Activated CD8-positive, alpha-beta T cell treated with anti-CD3 and anti-CD28 coated beads, Interleukin-2, amount 10 ng/mL, durations not matched to agents 7 days and 5 days (primary cell): ENCODE measurements at regions of chr1 and their contacts with region 1.

Region 1: GRCh38 chr1:10430216-10431069 is at the start of gene CENPS:
- DNase-seq: peak; percentile 93
- ATAC-seq: peak; percentile 89
- H3K4me3 Mint-ChIP-seq: peak within 1 kb of the TSS; percentile 93
- H3K27ac Mint-ChIP-seq: peak within 1 kb of the TSS; percentile 95
- H3K4me1 Mint-ChIP-seq: peaks cover 27% of the 10 kb centered on the region
- H3K27me3 Mint-ChIP-seq: no peaks in the 10 kb centered on the region
- total RNA-seq, gene CENPS: 18.3 to 21.9 TPM

Region 2: DNA sequence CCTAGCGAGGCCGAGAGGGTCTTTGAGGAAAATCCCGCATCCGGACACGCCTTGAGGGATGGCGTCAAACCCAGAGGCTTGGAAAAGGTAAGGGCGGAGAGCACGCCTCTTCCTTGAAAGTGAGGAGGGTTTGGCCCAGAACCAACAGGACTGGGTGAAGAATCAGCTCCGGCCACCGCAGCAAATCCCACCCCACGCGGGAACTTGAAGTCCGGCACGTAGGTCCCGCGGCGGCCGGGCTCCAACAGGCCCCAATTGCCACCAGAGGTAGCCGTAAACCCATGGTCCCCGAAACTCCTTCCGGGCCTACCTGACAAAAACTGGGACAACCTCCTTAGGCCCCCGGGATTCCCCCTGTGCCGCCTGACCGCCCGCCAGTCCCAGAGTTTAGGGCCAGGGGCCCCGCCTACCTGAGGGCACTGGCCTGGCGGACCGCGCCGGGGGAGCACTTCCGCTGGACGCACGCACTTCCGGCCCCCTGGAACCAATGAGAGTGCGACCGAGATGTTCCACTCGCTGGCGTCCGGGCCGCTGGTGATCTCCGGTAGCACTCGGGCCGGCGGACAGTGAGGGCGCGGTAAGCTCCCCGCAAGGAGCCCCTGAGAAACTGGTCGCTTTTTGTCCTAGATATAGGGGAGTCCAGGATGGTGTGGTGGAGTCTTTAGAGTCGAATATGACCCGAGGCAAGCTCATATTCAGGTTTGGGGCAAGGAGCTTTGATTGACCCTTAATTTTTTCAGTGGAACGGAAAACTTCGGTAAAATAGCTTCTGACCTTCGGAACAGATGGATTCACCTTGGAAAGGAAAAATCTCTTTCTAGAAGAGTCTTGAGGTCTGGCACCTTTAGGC is 487.3 kb before region 1 on chr1 and contains the starts of genes LZIC and NMNAT1:
- CTCF ChIA-PET with region 1: interaction called, 20 read pairs
- POLR2A ChIA-PET with region 1: no interaction called
- DNase-seq: peak; percentile 94
- ATAC-seq: peak; percentile 95
- H3K4me3 Mint-ChIP-seq: peak within 1 kb of the TSS; percentile 99
- H3K27ac Mint-ChIP-seq: peak within 1 kb of the TSS; percentile 98
- H3K4me1 Mint-ChIP-seq: peaks cover 18% of the 10 kb centered on the region
- H3K27me3 Mint-ChIP-seq: no peaks in the 10 kb centered on the region
- total RNA-seq, gene LZIC: 34.7 to 36.3 TPM
- total RNA-seq, gene NMNAT1: 6.2 to 6.3 TPM

Region 3: DNA sequence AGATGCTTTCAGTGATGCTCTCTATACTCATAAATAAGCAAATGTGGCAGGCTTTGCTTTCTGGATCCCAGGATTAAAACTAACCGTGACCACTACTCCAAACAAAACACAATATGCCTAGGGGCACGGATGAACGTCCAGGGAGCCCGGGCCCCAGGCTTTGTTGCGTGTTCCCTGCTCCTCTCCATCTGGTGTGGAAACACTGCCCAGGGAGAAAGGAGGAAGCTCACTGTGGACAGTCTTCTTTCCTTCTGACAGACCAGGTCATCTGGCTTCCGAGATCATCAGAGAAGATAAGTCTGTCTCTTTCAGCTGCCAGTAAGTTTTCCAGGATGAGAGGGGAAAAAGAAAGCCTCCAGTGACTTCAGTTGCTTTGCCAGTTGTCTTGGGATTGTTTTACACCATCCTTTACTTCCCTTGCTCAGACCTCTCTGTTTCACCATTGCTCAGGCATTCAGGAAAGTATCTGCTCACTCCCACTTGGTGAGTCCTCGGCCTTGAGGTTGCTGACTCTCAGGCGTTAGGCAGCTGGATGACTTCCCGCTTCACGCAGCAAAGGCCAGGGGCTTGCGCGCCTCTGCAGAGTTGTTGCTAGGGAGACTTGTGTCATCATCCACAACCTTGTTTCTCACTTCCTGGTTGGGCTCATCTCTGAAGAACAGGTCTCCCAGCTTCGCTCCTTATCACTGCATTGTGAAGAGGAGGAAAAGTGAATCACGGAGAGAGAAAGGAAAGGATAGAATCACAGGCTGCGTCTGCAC is 52.2 kb before region 1 on chr1:
- CTCF ChIA-PET with region 1: interaction called, 15 read pairs
- POLR2A ChIA-PET with region 1: no interaction called
- DNase-seq: no peak
- ATAC-seq: no peak
- H3K4me3 Mint-ChIP-seq: no peak overlapping the region
- H3K27ac Mint-ChIP-seq: no peak overlapping the region
- H3K4me1 Mint-ChIP-seq: no peaks in the 10 kb centered on the region
- H3K27me3 Mint-ChIP-seq: no peaks in the 10 kb centered on the region

Region 4: GRCh38 chr1:10398734-10399623 is 31.5 kb before region 1 on chr1 and contains the start of gene PGD:
- CTCF ChIA-PET with region 1: interaction called, 11 read pairs
- POLR2A ChIA-PET with region 1: no interaction called
- DNase-seq: peak; percentile 99
- ATAC-seq: peak; percentile 98
- H3K4me3 Mint-ChIP-seq: peak within 1 kb of the TSS; percentile 81
- H3K27ac Mint-ChIP-seq: peak within 1 kb of the TSS; percentile 87
- H3K4me1 Mint-ChIP-seq: peaks cover 33% of the 10 kb centered on the region
- H3K27me3 Mint-ChIP-seq: no peaks in the 10 kb centered on the region
- total RNA-seq, gene PGD: 88.3 to 91.8 TPM

Region 5: DNA sequence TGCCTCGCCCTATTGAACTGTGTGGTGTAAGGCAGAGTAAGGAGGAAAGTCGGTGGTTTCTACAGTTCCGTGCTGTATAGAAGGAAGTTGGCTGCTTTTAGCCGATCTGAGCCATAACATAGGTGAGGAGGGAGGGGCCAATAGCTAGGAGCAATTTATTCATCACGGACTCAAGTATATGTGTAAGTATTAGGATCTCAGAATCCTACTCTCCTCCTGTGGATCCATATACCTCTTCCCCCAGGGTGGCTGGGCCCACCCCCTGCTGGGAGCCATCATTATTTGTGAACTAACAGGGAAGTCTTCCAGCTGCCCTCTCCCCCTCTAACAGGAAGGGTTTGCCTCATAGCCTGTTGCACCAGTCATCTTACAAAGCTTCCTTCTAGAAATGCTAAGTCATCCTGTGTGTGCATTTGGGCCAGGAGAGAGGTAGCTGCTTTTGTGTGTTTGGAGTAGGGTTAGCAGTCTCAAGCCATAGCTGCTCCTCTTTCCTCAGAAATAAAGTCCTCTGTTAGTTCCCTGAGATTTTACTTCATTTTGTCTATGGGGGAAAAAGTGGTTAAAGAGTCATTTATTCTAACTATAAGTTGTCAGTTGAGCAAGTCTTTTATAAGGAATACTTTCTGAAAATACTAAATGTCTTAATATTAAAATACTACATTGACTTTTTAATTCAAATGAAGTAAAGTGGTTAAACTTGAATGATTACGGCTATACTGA is 15.1 kb before region 1 on chr1:
- CTCF ChIA-PET with region 1: interaction called, 17 read pairs
- POLR2A ChIA-PET with region 1: interaction called, 3 read pairs
- DNase-seq: no peak
- ATAC-seq: peak; percentile 80
- H3K4me3 Mint-ChIP-seq: peak overlapping the region; percentile 44
- H3K27ac Mint-ChIP-seq: peak overlapping the region; percentile 89
- H3K4me1 Mint-ChIP-seq: peaks cover 14% of the 10 kb centered on the region
- H3K27me3 Mint-ChIP-seq: no peaks in the 10 kb centered on the region

Region 6: GRCh38 chr1:10484521-10484920 is 54.1 kb after region 1 on chr1:
- CTCF ChIA-PET with region 1: interaction called, 127 read pairs
- POLR2A ChIA-PET with region 1: no interaction called
- DNase-seq: no peak
- ATAC-seq: no peak
- H3K4me3 Mint-ChIP-seq: no peak overlapping the region
- H3K27ac Mint-ChIP-seq: no peak overlapping the region
- H3K4me1 Mint-ChIP-seq: peaks cover 6% of the 10 kb centered on the region
- H3K27me3 Mint-ChIP-seq: no peaks in the 10 kb centered on the region

Region 7: GRCh38 chr1:10507111-10507879 is 76.9 kb after region 1 on chr1:
- CTCF ChIA-PET with region 1: interaction called, 20 read pairs
- POLR2A ChIA-PET with region 1: interaction called, 4 read pairs
- DNase-seq: peak; percentile 74
- ATAC-seq: peak; percentile 46
- H3K4me3 Mint-ChIP-seq: no peak overlapping the region
- H3K27ac Mint-ChIP-seq: peak overlapping the region; percentile 15
- H3K4me1 Mint-ChIP-seq: peaks cover 54% of the 10 kb centered on the region
- H3K27me3 Mint-ChIP-seq: no peaks in the 10 kb centered on the region

Region 8: GRCh38 chr1:10540277-10541005 is 110.0 kb after region 1 on chr1:
- CTCF ChIA-PET with region 1: no interaction called
- POLR2A ChIA-PET with region 1: no interaction called
- DNase-seq: no peak
- ATAC-seq: no peak
- H3K4me3 Mint-ChIP-seq: no peak overlapping the region
- H3K27ac Mint-ChIP-seq: no peak overlapping the region
- H3K4me1 Mint-ChIP-seq: peaks cover 38% of the 10 kb centered on the region
- H3K27me3 Mint-ChIP-seq: no peaks in the 10 kb centered on the region